Breast epithelium (tissue), 4 donors: ENCODE measurements at regions of chr7 and their contacts with region 1.

Region 1: GRCh38 chr7:11592699-11593098 is 239.3 kb downstream of the THSD7A start:
- DNase-seq: no peak
- H3K4me3 ChIP-seq: no peak overlapping the region
- H3K27ac ChIP-seq: no peak overlapping the region
- H3K4me1 ChIP-seq: no peaks in the 10 kb centered on the region
- H3K27me3 ChIP-seq: no peaks in the 10 kb centered on the region
- CTCF ChIP-seq: no peak
- POLR2A ChIP-seq: no peak

Region 2: DNA sequence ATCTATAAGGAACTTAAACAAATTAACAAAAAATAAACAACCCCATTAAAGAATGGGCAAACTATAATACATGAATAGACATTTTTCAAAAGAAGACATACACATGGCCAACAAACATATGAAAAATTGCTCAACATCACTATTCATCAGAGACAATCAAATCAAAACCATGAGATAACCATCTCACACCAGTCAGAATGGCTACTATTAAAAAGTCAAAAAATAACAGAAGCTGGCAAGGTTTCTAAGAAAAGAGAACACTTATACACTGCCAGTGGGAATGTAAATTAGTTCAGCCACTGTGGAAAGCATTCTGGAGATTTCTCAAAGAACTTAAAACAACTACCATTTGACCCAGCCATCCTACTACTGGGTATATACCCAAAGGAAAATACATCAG is 41.2 kb before region 1 on chr7:
- intact Hi-C with region 1: loop called (anchors 2 kb)
- DNase-seq: no peak
- H3K4me3 ChIP-seq: no peak overlapping the region
- H3K27ac ChIP-seq: no peak overlapping the region
- H3K4me1 ChIP-seq: no peaks in the 10 kb centered on the region
- H3K27me3 ChIP-seq: no peaks in the 10 kb centered on the region
- CTCF ChIP-seq: no peak
- POLR2A ChIP-seq: no peak

Region 3: GRCh38 chr7:11579141-11579540 is 13.6 kb before region 1 on chr7:
- intact Hi-C with region 1: no loop called
- DNase-seq: no peak
- H3K4me3 ChIP-seq: no peak overlapping the region
- H3K27ac ChIP-seq: no peak overlapping the region
- H3K4me1 ChIP-seq: no peaks in the 10 kb centered on the region
- H3K27me3 ChIP-seq: no peaks in the 10 kb centered on the region
- CTCF ChIP-seq: no peak
- POLR2A ChIP-seq: no peak

Region 4: DNA sequence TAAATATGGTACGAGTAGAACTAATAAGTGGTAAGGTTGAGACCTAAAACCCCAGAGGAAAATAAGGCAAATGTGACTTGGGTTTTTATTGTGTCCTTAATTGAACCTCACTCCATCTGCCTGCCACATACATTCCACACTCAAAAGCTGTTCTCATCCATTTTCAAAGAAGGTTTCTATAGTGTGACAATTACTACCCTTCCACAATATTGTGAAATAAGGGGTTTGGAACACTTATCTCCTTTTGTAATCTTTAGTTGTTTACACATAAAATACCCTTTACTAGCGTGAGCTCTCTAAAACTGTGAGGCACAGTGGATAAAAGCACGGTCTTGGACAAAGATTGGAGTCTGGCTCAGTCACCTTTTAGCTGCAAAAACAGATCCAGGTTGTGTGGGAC is 72.7 kb after region 1 on chr7:
- intact Hi-C with region 1: no loop called
- DNase-seq: no peak
- H3K4me3 ChIP-seq: no peak overlapping the region
- H3K27ac ChIP-seq: no peak overlapping the region
- H3K4me1 ChIP-seq: no peaks in the 10 kb centered on the region
- H3K27me3 ChIP-seq: no peaks in the 10 kb centered on the region
- CTCF ChIP-seq: no peak
- POLR2A ChIP-seq: no peak